ENCODE measurements at regions of chr4 and their contacts with region 1.

Region 1: DNA sequence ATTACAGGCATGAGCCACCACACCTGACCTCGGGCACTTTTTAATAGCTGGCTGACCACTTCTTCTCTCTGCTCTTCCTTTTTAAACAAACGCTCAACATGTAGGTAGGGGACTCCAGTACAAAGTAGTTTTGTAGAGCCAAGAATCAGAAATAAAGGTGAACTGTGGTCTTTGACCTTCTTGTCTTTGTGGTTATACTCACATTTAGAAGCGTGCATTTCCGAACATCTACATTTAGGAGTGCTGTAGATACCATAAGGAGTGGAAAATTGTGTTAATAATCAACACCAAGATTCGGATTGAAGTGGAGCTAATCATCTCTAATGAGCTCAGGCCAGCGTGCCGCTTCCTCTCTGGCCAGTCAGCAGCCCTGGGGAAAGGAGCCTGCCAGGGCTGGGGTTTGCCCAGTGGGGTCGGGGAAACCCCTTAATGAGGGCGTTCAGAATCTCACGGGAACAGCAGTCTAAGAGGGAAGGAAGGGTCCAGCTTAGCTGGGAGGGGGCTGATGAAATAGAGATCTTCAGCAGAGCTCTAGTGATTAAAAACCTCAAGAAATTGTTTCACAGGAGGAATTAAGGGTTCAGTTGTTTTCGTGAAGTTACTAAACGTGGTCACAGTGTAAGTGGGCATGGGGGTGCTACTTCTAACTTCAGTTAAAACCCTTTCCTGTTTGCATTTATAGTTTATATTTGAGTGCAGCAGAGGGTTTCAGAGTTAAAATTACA is 81.2 kb downstream of the GAB1 start:
- DNase-seq: peak; percentile 74
- ATAC-seq: peak; percentile 97
- H3K4me3 ChIP-seq: no peak overlapping the region
- H3K27ac ChIP-seq: no peak overlapping the region
- H3K4me1 ChIP-seq: no peaks in the 10 kb centered on the region
- H3K27me3 ChIP-seq: no peaks in the 10 kb centered on the region
- CTCF ChIP-seq: no peak
- EP300 ChIP-seq: peak in 1 of 2 experiments; percentile 70; a peak in 3 of 4 replicates
- POLR2A ChIP-seq: no peak
- RAD21 ChIP-seq: no peak

Region 2: GRCh38 chr4:143184217-143185116 is 233.4 kb before region 1 on chr4 and contains the start of gene USP38:
- CTCF ChIA-PET with region 1: no interaction called
- POLR2A ChIA-PET with region 1: no interaction called
- RAD21 ChIA-PET with region 1: no interaction called
- SMC1A ChIA-PET with region 1: no interaction called
- in situ Hi-C with region 1: no loop called
- intact Hi-C with region 1: loop called (anchors 5 kb)
- DNase-seq: peak; percentile 73
- ATAC-seq: peak; percentile 88
- H3K4me3 ChIP-seq: peak within 1 kb of the TSS; percentile 89
- H3K27ac ChIP-seq: peak within 1 kb of the TSS; percentile 77
- H3K4me1 ChIP-seq: no peaks in the 10 kb centered on the region
- H3K27me3 ChIP-seq: no peaks in the 10 kb centered on the region
- CTCF ChIP-seq: no peak
- EP300 ChIP-seq: no peak
- POLR2A ChIP-seq: peak; percentile 77
- RAD21 ChIP-seq: no peak
- polyA plus RNA-seq, gene USP38: 4.4 to 4.6 TPM

Region 3: DNA sequence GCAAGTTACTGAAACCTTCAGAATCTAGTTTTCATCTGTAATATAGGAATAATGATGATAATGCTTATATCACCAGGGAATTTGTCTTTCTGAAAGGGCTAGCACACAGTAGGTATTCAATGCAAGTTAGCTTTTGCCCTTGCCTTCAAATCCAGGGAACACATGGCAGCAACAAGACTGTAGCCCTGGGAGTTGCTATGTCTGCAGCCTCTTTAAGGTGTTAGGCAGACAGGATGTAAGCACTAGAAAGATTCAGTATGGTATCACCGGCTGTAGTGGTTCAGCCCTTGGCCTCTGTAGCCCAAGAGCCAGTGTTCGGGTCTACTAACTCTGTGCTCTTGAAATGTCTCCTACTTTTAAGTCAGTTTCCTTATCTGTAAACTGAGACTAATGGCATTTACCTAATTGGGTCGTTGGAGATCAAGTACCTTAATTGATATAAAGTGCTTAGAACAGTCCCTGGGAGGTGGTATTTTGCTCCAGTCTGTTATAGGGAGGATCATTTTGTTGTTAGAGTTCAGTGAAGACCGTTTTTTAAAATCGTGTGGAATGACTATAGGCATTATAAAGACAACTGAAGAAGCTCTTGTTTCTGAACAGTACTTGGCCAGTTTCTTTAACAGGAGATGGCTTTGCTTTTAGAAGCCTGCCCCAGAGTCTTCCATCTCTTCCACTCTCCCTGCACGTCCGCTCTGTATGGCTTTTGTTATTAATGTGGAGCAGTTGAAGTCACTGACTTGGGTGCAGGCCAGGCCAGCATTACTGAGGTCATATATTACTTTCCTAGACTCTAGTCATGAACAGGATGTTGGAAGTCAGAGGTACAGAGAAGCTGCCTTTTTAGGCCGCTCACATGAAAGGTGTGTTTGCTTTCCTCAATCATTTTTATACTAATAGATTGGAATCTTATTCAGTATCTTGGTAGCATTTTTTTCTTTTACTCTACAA is 36.4 kb before region 1 on chr4:
- CTCF ChIA-PET with region 1: interaction called, 63 read pairs
- POLR2A ChIA-PET with region 1: interaction called, 16 read pairs
- RAD21 ChIA-PET with region 1: interaction called, 97 read pairs
- SMC1A ChIA-PET with region 1: interaction called, 89 read pairs
- in situ Hi-C with region 1: no loop called
- intact Hi-C with region 1: no loop called
- DNase-seq: no peak
- ATAC-seq: peak; percentile 67
- H3K4me3 ChIP-seq: no peak overlapping the region
- H3K27ac ChIP-seq: no peak overlapping the region
- H3K4me1 ChIP-seq: peaks cover 33% of the 10 kb centered on the region
- H3K27me3 ChIP-seq: no peaks in the 10 kb centered on the region
- CTCF ChIP-seq: no peak
- EP300 ChIP-seq: no peak
- POLR2A ChIP-seq: no peak
- RAD21 ChIP-seq: no peak

Region 4: DNA sequence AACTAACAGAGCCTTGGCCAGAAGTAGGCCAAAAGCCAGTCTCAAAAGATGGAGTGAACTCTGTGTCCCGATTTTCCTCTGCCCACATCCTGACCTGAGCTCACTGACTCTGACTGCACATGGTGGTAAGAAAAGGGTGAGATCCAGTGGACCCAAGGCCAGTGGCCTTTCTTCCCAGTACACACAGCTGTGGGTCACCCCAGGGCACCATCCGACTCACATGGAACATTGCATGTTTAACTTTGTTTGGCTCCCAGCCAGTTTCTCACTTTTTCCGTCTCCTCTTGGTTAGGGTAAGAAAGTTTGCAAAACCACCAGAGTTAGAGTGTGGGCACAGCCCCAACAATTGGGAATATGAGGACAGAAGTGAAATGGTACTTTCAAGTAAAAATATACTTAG is 11.3 kb before region 1 on chr4:
- CTCF ChIA-PET with region 1: interaction called, 70 read pairs
- POLR2A ChIA-PET with region 1: interaction called, 33 read pairs
- RAD21 ChIA-PET with region 1: interaction called, 89 read pairs
- SMC1A ChIA-PET with region 1: interaction called, 166 read pairs
- in situ Hi-C with region 1: no loop called
- intact Hi-C with region 1: no loop called
- DNase-seq: no peak
- ATAC-seq: no peak
- H3K4me3 ChIP-seq: no peak overlapping the region
- H3K27ac ChIP-seq: no peak overlapping the region
- H3K4me1 ChIP-seq: peaks cover 30% of the 10 kb centered on the region
- H3K27me3 ChIP-seq: peaks cover 0 to 2% of the 10 kb centered on the region in 2 experiments; a peak in 1 of 4 replicates
- CTCF ChIP-seq: no peak
- EP300 ChIP-seq: no peak
- POLR2A ChIP-seq: no peak
- RAD21 ChIP-seq: no peak

Region 5: DNA sequence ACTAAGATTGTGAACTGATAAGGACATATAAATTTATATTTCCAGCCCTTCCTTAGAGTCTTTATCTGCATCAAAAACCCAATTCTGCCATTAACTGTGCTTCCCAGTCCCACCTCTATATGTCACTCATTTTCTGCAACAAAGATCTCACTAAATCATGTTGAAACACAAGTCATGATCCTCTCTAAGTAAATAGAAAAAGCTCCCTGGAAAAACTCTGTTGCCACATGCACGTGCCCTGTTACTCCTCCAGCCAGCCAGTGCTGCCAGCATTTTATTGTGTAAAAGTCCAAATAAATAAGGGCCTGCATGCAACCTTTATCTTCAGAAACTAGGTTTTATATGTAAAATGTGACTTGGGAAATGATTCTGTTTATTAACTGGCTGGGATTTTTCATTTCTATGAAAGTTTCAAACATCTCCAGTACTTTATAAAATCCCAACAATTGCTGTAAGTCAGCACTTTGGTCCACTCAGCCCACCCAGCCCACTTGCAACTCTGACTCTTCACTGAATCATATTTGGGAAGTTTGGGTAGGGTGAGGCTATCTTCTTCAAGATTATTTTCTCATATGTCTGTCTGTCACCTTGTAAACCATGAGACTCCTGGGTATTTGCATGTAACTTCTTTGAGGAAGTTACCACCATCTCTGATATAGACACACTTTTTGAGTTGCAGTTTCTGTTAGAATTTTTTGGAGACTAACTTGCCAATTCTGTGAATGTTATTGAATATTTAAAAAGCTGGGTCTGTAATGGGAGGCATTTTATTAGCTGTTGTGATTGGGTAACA is 55.7 kb after region 1 on chr4:
- CTCF ChIA-PET with region 1: interaction called, 4 read pairs
- POLR2A ChIA-PET with region 1: no interaction called
- RAD21 ChIA-PET with region 1: interaction called, 6 read pairs
- SMC1A ChIA-PET with region 1: interaction called, 18 read pairs
- in situ Hi-C with region 1: no loop called
- intact Hi-C with region 1: no loop called
- DNase-seq: no peak
- ATAC-seq: peak; percentile 71
- H3K4me3 ChIP-seq: no peak overlapping the region
- H3K27ac ChIP-seq: no peak overlapping the region
- H3K4me1 ChIP-seq: no peaks in the 10 kb centered on the region
- H3K27me3 ChIP-seq: no peaks in the 10 kb centered on the region; a peak in 1 of 4 replicates
- CTCF ChIP-seq: no peak
- EP300 ChIP-seq: no peak
- POLR2A ChIP-seq: no peak
- RAD21 ChIP-seq: no peak